ENCODE measurements at regions of chr16 and their contacts with region 1.

Region 1: DNA sequence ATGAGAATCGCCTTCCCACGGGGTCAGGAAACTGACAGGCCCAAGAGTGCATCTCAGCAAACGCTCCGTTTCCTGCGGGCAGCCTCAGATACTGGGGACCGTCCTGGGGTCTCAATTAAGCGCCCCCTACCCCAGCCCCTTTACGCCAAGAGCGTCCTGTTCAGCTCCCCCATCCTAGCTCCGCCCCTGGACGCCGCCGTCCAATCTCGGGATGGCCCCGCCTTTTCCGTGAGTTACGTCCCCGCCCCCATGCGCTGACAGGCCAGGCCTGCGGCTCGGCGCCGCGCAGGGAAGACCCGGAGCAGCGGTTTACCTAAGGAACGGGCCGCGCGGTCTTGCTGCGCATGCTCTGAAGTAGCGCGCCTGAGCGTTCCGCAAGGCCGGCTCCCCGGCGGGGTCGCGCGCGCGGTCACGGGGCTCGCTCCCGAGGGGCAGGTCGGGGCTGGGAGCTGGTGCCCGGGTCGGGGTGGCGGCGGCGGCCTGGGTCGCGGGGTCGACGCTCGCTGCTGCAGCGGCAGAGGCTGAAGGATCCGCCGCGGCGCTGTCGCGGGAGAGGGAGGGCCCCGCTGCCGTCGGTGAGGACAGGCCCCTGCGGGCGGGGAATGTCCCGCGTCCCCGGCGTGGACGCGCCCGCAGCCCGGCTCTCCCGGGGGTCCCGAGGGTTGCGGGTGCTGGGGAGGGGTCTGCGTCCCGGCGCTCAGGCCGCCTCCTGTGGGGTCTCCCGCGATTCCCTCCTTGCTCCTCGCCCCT is at the start of gene FLYWCH1:
- DNase-seq: peak; percentile 98
- ATAC-seq: peak; percentile 99
- H3K4me3 ChIP-seq: peak within 1 kb of the TSS; percentile 50 to 77 (median 70)
- H3K4me3 Mint-ChIP-seq: peak within 1 kb of the TSS; percentile 96
- H3K27ac ChIP-seq: peak within 1 kb of the TSS; percentile 38 to 66
- H3K27ac Mint-ChIP-seq: peak within 1 kb of the TSS; percentile 92
- H3K4me1 ChIP-seq: peaks cover 11 to 18% of the 10 kb centered on the region in 2 donors
- H3K4me1 Mint-ChIP-seq: peaks cover 29% of the 10 kb centered on the region
- H3K27me3 ChIP-seq: no peaks in the 10 kb centered on the region
- H3K27me3 Mint-ChIP-seq: no peaks in the 10 kb centered on the region
- CTCF ChIP-seq: no peak
- total RNA-seq, gene FLYWCH1: 119 and 120 TPM in 2 replicates

Region 2: DNA sequence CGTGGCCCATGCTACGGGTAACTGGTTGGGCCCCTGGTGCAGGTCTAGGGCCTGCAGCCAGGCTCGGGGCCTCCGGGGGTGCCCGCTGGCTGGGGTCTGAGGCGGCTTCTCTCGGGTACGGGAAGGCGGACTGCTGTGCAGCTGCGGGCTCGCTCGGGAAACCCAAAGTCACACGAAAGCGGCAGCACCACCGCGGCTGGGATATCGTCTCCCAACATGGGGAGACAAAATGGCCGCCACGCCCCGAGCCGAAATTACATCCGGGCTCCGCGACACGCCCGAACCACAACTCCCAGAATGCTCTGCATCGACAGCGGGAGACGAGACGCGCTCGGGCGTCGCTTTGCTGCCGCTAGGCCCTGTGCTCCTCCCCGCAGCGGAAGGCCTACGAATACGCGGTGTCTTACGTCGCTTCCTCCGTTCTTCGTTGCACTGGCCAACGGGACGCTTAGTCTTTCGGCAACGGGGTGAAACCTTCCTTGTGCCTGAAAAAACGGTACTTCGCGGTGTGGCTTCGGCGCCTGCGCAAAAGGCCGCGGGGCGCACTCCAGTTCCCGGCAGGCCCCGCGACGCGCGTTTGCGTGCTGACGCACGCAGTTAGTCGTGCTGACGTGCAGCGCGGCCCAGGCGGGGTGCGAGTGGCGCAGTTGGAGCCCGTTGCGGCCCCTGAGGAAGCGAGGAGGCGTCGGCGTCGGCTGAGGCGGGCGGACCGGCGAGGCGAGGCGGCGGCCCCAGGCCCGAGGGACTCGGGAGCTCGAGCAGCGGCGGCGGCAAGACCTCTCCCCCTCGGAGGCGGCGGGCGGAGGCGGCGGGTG is 159.5 kb before region 1 on chr16 and contains the start of gene SRRM2:
- CTCF ChIA-PET with region 1: no interaction called
- POLR2A ChIA-PET with region 1: interaction called, 6 read pairs
- intact Hi-C with region 1: loop called (anchors 1 kb)
- DNase-seq: peak; percentile 100
- ATAC-seq: peak; percentile 83
- H3K4me3 ChIP-seq: peak within 1 kb of the TSS; percentile 68 to 97 (median 82)
- H3K4me3 Mint-ChIP-seq: peak within 1 kb of the TSS; percentile 95
- H3K27ac ChIP-seq: peak within 1 kb of the TSS; percentile 95 to 98
- H3K27ac Mint-ChIP-seq: peak within 1 kb of the TSS; percentile 99
- H3K4me1 ChIP-seq: peaks cover 36 to 45% of the 10 kb centered on the region in 2 donors
- H3K4me1 Mint-ChIP-seq: peaks cover 50% of the 10 kb centered on the region
- H3K27me3 ChIP-seq: no peaks in the 10 kb centered on the region
- H3K27me3 Mint-ChIP-seq: no peaks in the 10 kb centered on the region
- CTCF ChIP-seq: no peak
- total RNA-seq, gene SRRM2: 1,470 and 1,485 TPM in 2 replicates

Measured in B cell (primary cell).